GM10248 (cell line): ENCODE measurements at regions of chr3 and their contacts with region 1.

Region 1: DNA sequence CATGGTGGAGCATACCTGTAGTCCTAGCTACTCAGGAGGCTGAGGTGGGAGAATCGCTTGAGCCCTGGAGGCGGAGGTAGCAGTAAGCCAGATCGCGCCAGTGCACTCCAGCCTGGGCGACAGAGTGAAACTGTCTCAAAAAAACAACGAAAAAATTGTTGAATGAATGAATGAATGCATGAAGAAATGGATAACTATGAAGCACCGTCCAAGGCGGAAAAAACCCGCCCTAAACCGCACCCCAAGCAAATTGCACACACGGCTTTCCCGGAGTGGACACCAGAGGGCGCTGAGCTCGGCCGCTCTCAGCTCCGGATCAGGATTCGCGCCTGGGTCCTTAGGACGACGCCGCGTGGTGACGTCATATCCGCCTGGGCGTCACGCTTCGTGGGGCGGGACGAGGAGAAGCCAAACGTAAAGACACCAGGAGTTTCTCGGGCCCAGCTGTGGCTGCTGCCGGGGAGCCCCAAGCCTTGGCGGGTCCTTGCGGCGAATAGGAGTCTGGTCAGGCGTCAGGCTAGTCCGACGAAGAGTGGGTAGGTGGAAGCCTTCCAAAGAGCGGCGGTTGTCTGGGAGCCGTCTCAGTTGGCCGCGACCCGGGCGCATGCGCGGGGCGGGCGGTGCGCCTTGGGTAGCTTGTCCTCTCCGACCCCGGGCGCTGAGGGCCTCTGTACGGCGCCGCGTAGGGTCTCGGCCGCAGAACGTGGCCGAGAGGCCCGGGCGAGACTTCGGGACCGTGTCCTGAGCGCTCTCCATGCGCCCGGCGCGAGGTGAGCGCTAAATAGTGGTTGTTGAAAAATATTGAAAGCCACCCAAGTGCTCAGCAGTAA is at the starts of genes HTD2 and RPP14:
- DNase-seq: peak; percentile 96
- CTCF ChIP-seq: peak; percentile 98

Region 2: DNA sequence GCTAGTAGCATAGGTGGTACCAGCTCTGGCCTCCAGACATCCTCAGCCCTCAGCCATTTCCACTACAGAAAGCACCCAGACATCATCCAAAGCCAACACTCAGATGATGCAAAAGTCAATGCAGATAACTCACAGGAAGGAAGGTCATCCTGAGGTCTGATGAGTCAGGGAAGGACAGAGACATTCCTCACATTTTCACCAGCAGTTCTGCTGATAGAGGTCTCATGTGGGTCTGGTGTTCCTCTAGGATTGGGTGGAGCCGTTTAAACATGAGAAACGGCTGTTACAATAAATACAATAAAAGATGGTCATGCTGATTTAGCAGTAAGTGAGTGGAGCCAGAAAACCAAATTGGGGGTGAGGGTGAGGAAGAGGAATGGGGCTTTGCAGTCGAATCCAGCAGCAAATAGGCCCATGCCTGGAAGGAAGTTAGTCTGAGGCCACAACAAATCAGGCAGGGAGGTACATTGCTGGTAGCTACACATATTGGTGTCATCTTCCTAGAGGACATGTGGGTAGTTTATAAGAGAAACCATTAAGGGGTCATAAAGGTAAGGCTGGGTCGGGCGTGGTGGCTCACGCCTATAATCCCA is 331.2 kb before region 1 on chr3:
- CTCF ChIA-PET with region 1: no interaction called
- POLR2A ChIA-PET with region 1: no interaction called
- DNase-seq: no peak
- CTCF ChIP-seq: no peak

Region 3: GRCh38 chr3:58177747-58178527 is 128.2 kb before region 1 on chr3:
- CTCF ChIA-PET with region 1: interaction called, 560 read pairs
- POLR2A ChIA-PET with region 1: no interaction called
- DNase-seq: peak; percentile 89
- CTCF ChIP-seq: peak; percentile 96

Region 4: DNA sequence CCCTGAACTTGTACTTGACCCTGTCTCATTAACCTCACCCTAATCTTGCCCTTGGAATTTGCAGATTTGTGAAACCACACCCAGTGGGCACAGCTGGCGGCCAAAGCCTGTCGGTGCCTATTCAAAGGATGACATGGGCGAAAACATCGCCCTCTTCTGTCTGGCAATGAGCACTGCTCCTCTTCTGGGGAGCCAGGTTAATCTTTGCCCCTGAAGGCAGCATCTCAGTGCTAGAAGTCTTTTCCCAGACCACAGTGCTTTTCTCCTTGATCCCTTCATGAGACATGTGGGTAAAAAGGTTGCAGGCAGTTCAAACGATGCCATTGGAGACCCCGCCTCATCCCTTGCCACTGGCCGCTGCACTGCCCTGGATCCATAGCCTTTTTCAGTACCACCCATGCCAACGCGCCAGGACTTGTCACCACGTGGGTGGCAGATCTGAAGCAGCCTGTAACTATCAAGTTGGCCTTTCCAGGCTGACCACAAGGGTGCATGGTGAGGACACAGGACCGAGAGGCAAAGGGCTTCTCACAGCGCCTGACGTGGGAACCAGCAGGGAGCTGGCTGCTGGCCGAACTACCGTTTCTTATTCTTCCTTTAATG is 88.8 kb before region 1 on chr3:
- CTCF ChIA-PET with region 1: interaction called, 22 read pairs
- POLR2A ChIA-PET with region 1: no interaction called
- DNase-seq: peak; percentile 56
- CTCF ChIP-seq: peak; percentile 69

Region 5: GRCh38 chr3:58324391-58325390 is 18.6 kb after region 1 on chr3:
- CTCF ChIA-PET with region 1: interaction called, 107 read pairs
- POLR2A ChIA-PET with region 1: interaction called, 4 read pairs
- DNase-seq: no peak
- CTCF ChIP-seq: no peak

Region 6: DNA sequence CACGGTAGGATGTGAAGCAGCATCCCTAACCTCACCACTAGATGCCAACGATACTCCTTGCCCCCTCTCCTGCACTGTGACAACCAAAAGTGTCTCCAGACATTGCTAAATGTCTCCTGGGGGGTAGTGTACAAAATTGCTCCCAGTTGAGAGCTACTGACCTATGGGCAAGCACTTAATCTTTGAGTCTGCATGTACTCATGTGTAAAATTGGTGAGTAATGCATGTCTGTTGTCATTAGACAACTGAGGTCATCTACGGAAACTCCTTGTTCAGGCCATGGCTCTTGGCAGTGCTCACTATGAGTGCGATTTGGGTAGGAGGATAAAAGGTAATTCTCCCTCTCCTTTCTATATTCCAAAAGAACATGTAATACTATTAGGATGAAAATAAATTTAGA is 98.3 kb after region 1 on chr3:
- CTCF ChIA-PET with region 1: interaction called, 11 read pairs
- POLR2A ChIA-PET with region 1: no interaction called
- DNase-seq: no peak
- CTCF ChIP-seq: no peak

Region 7: DNA sequence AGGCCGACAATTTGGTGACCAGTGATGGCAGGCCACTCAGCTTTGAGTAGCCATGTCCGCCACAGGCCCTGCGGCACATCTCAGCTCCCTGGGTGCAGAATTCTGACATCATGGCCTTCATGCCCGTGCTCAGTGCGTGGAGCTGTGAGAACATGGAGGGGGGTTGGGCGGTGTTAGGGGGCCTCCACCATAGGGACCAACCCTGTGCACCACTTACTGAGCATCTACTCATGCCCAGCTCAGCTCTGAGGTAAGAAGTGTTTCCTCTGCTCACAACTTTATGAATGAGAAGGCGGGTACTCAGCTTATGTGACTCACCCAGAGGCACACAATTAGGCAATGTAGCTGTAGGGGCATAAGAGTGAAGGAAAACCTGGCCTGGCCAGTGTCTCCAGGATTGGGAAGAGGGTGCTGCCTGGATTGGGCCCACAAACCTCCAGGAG is 220.4 kb after region 1 on chr3:
- CTCF ChIA-PET with region 1: interaction called, 95 read pairs
- POLR2A ChIA-PET with region 1: no interaction called
- DNase-seq: no peak
- CTCF ChIP-seq: no peak

Region 8: DNA sequence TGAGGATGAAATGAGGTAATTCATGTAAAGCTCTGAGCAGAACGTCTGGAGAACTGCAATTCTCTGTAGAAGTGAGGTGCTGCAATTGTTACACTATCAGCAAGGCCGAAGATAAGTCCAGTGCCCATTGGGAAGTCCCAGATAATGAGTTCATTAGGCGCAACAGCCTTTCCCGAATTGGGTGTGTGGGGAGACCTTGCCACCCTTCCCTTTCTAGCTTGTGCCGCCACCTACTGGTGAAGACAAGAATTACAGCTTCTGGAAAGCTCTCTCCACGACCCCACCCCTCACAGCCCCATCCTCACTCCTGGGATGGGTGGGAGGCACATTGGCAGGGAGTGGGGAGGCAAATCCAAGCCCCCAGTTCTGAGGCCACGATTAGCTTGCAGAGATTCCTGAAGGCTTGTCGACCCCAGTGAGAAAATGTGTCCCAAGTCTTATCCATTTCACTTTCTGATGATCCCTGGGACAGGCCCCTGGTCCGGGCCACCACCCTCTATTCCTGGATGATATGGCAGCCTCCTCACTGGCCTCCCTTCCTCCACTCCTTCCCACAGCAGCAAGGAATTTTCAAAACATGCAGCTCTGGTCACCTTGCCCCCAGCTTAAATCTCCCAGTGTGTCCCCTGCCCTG is 324.1 kb after region 1 on chr3:
- CTCF ChIA-PET with region 1: interaction called, 52 read pairs
- POLR2A ChIA-PET with region 1: no interaction called
- DNase-seq: peak; percentile 68
- CTCF ChIP-seq: peak; percentile 88